Panc1 (cell line): ENCODE measurements at regions of chr3 and their contacts with region 1.

Region 1: DNA sequence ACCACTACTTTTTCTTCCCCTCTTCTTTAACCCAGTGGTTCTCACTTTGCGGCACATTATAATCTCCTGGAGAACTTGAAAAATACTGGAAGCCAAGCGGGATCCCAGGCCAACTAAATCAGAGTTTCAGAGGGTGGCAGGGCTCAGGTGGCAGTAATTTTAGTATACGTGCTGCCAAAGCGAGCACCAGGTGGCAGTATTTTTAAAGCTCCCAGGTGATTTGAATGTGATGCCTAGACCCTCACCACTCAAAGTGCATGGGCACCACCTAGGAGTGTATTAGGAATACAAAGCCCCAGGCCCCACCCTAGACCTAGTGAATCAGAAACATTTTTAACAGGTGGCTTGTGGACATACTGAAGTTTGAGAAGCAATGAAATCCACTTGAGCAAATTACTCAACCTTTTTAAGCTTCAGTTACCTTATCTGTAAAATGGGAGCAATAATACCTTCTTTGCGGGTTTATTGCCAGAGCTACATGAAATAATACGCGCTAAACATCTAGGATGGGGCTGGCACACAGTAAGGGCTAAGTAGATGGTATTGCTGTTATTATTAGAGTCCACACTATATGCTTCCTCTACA is 8.3 kb downstream of the B3GALNT1 start:
- DNase-seq: no peak
- ATAC-seq: peak; percentile 82
- H3K4me3 ChIP-seq: no peak overlapping the region
- H3K27ac ChIP-seq: no peak overlapping the region
- H3K4me1 ChIP-seq: no peaks in the 10 kb centered on the region
- H3K27me3 ChIP-seq: no peaks in the 10 kb centered on the region
- CTCF ChIP-seq: peak; percentile 81

Region 2: DNA sequence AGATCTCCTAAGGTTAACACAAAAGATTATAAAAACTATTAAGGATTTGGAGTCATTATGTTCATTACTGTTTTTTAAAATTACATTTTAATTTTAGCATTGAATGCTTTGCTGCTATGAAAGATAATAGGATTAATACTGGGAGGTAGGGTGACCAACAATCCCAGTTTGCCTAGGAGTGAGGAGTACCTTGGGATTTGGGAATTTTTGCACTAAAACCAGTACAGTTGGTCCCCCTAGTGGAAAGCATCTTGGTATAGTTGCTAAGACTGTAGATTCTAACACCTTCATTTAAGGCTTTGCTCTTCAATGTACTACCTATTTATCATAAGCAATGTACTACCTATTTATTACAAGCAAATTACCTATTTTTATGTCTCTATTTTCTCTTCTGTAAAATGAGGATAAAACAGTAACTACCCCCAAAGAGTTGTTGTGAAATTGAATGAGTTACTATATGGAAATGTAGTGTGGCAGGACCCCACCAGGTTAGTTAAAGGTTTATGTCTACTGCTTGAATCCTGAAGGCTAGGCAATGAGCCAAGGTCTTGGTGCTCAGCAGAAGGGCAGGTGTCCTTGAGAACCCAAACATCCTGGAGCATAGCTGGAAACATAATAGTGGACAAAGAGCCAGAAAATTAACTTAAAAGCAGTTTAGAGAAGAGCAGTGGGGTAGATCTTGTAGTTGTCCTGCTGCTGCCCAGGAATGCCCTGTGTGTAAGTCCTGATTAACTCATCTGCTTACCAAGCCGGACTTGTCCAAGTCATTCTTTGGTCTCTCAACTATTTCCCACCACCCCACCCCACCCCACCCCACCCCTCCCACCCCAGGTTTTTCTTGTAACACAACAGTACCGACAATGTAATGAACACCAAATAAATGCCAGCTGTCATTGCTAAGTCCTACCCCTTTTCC is 75.0 kb after region 1 on chr3:
- CTCF ChIA-PET with region 1: interaction called, 4 read pairs
- POLR2A ChIA-PET with region 1: no interaction called
- in situ Hi-C with region 1: no loop called
- intact Hi-C with region 1: loop called (anchors 2 kb)
- DNase-seq: no peak
- ATAC-seq: peak; percentile 71; the same call in 1 of the 2 replicates
- H3K4me3 ChIP-seq: no peak overlapping the region
- H3K27ac ChIP-seq: no peak overlapping the region
- H3K4me1 ChIP-seq: no peaks in the 10 kb centered on the region
- H3K27me3 ChIP-seq: no peaks in the 10 kb centered on the region
- CTCF ChIP-seq: peak; percentile 44; the same call in 1 of the 2 replicates